MCF 10A (cell line): ENCODE measurements at regions of chr10 and their contacts with region 1.

Region 1: GRCh38 chr10:120948889-120949608 is 97.9 kb downstream of the WDR11 start:
- DNase-seq: peak; percentile 73
- H3K4me3 Mint-ChIP-seq: no peak overlapping the region
- H3K27ac Mint-ChIP-seq: no peak overlapping the region
- H3K4me1 Mint-ChIP-seq: peaks cover 10% of the 10 kb centered on the region
- H3K27me3 Mint-ChIP-seq: no peaks in the 10 kb centered on the region
- CTCF ChIP-seq: peak; percentile 92

Region 2: GRCh38 chr10:120962756-120963593 is 13.9 kb after region 1 on chr10:
- CTCF ChIA-PET with region 1: interaction called, 14 read pairs
- POLR2A ChIA-PET with region 1: interaction called, 4 read pairs
- intact Hi-C with region 1: no loop called
- DNase-seq: no peak
- H3K4me3 Mint-ChIP-seq: no peak overlapping the region
- H3K27ac Mint-ChIP-seq: no peak overlapping the region
- H3K4me1 Mint-ChIP-seq: no peaks in the 10 kb centered on the region
- H3K27me3 Mint-ChIP-seq: peaks cover 11% of the 10 kb centered on the region
- CTCF ChIP-seq: no peak

Region 3: GRCh38 chr10:121088524-121088923 is 139.5 kb after region 1 on chr10:
- CTCF ChIA-PET with region 1: interaction called, 11 read pairs
- POLR2A ChIA-PET with region 1: no interaction called
- intact Hi-C with region 1: loop called (anchors 5 kb)
- DNase-seq: peak; percentile 36
- H3K4me3 Mint-ChIP-seq: no peak overlapping the region
- H3K27ac Mint-ChIP-seq: no peak overlapping the region
- H3K4me1 Mint-ChIP-seq: peaks cover 21% of the 10 kb centered on the region
- H3K27me3 Mint-ChIP-seq: no peaks in the 10 kb centered on the region
- CTCF ChIP-seq: peak; percentile 25

Region 4: GRCh38 chr10:121171825-121172773 is 223.1 kb after region 1 on chr10:
- CTCF ChIA-PET with region 1: no interaction called
- POLR2A ChIA-PET with region 1: no interaction called
- intact Hi-C with region 1: loop called (anchors 10 kb)
- DNase-seq: no peak
- H3K4me3 Mint-ChIP-seq: no peak overlapping the region
- H3K27ac Mint-ChIP-seq: no peak overlapping the region
- H3K4me1 Mint-ChIP-seq: no peaks in the 10 kb centered on the region
- H3K27me3 Mint-ChIP-seq: no peaks in the 10 kb centered on the region
- CTCF ChIP-seq: no peak

Region 5: DNA sequence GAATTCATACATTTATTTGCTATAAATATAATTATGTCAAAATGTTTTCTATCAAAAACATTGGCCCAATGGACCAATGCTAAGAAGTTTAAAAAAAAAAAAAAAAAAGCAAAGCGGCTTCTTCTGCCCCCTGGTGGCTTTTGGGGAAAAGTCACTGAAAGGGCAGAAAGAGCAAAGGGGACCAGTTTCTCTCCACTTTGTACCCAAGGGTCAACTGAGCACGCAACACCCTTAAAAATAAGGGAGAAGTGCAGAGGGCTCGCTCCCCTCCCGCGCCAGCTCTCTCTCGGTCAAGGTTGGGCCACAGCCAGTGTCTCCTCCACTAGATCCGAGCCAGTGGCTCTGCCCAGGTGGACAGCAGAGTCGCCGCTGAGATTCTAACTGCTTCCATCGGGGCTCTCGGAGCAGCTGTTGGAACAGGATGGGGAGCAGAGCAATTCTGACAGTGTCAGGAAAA is 785.6 kb after region 1 on chr10:
- CTCF ChIA-PET with region 1: interaction called, 27 read pairs
- POLR2A ChIA-PET with region 1: no interaction called
- intact Hi-C with region 1: no loop called
- DNase-seq: peak; percentile 57
- H3K4me3 Mint-ChIP-seq: no peak overlapping the region
- H3K27ac Mint-ChIP-seq: no peak overlapping the region
- H3K4me1 Mint-ChIP-seq: no peaks in the 10 kb centered on the region
- H3K27me3 Mint-ChIP-seq: no peaks in the 10 kb centered on the region
- CTCF ChIP-seq: peak; percentile 57